ENCODE measurements at regions of chr1 and their contacts with region 1.

Region 1: DNA sequence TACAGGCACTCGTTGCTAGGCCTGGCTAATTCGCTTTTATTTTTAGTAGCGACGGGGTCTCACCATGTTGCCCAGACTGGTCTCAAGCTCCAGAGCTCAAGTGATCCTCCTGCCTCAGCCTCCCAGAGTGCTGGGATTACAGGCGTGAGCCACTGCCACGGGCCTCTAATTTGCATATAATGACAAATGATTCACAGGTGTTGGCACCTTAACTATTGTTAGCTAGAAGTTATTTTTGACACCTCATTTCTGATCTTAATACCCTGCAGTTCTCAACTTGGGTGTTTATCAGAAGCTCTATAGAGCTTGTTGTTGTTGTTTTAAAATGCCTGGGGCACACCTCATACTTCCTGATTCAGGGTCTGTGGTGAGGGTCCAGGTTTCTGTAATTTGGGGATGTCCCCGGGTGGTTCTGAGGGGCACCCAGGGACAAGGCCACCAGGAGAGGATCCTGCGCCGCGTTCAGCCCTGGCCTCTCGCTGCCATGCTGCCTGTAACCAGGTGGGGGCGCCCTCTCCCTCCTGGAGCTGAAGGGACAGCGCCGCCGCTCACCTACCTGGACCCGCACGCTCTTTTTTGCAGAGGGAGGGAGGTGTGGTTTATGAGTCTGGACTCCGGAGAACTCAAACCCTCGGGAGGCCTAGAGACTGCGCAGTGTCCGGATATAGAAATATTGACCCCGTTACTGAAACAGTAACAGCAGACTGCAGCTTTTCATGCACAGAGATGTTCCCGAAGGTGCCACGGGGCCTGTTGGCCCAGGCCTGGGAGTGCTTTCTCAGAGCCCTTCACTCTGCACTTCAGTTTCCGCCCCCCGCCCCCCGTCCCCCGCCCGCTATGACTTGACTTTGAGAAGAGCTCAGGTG is 23.0 kb upstream of the NEK2 start:
- DNase-seq: peak; percentile 64 to 79 (median 77)
- H3K4me3 ChIP-seq: peak overlapping the region in 5 of 7 experiments; percentile 23 to 70 (median 51)
- H3K27ac ChIP-seq: no peak overlapping the region
- H3K4me1 ChIP-seq: peaks cover 0 to 25% (median 15%) of the 10 kb centered on the region in 4 experiments
- H3K27me3 ChIP-seq: no peaks in the 10 kb centered on the region

Region 2: DNA sequence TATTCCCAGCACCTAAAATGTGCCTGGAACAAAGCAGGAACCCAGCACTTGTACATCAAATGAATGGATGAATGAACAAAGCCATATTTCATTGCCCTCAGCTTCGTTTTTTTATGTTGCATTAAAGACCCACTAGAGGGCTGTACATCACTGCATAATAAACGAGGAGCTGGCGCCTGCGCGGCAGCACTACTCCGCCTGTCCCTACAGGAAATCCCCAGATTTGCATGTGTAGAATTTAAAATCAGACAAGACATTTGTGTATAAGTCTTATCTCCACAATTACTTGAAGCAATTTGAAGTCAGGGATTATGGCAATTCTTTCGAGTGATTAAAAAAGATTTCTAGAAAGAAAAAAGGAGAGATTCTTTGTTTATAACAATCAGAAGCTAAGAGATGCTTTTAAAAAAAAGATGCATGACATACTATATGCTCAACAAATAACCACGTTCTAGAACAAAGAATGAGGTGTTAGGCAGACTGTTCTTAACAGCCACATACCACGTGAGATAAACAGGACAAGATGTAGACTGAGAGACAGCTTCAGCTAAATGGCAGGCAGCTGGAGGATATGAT is 17.6 kb before region 1 on chr1:
- CTCF ChIA-PET with region 1: interaction called, 22 read pairs
- POLR2A ChIA-PET with region 1: no interaction called
- DNase-seq: peak; percentile 87 to 94 (median 93)
- H3K4me3 ChIP-seq: no peak overlapping the region
- H3K27ac ChIP-seq: no peak overlapping the region
- H3K4me1 ChIP-seq: peaks cover 0 to 4% (median 2%) of the 10 kb centered on the region in 4 experiments
- H3K27me3 ChIP-seq: peaks cover 0 to 2% (median 0%) of the 10 kb centered on the region in 5 experiments

Region 3: GRCh38 chr1:211711315-211711705 is 12.9 kb after region 1 on chr1:
- CTCF ChIA-PET with region 1: interaction called, 20 read pairs
- POLR2A ChIA-PET with region 1: no interaction called
- DNase-seq: no peak
- H3K4me3 ChIP-seq: no peak overlapping the region
- H3K27ac ChIP-seq: no peak overlapping the region
- H3K4me1 ChIP-seq: peaks cover 0 to 5% (median 0%) of the 10 kb centered on the region in 4 experiments
- H3K27me3 ChIP-seq: no peaks in the 10 kb centered on the region

Region 4: DNA sequence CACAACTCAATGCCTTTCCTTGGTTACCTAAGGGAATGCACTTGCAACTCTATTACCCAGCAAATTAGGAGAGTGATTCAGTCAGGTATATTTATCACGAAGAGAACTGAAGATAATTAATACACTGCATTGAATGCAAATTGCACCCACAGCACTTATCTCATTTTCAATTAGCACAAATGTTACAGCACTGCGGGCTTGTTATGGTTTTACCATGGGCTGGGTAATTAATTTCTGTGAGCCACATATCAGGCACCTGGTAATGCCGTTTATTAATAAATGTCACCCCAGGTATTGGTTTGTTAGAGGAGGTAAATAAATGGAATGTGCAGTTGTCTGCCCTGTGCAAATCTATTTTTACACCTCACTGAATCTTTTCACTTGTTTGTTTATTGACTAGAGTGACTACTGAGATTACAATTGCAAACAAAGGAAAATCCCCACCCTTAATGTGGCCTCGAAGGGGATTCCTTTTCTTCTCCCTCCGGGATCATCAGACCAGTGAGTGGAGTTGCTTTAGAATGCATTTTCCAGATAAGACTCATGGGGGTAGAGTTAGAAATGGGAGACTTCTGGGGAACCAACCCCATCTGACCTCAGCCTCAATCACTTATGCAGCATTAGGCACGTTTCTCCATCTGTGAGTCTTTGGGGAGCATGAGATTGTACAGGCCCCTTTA is 1621.9 kb after region 1 on chr1:
- CTCF ChIA-PET with region 1: no interaction called
- POLR2A ChIA-PET with region 1: no interaction called
- DNase-seq: no peak
- H3K4me3 ChIP-seq: no peak overlapping the region
- H3K27ac ChIP-seq: no peak overlapping the region
- H3K4me1 ChIP-seq: peaks cover 0 to 2% (median under 1%) of the 10 kb centered on the region in 4 experiments
- H3K27me3 ChIP-seq: no peaks in the 10 kb centered on the region

Measured in common myeloid progenitor, CD34-positive (primary cell).